ENCODE measurements at regions of chr11 and their contacts with region 1.

Region 1: DNA sequence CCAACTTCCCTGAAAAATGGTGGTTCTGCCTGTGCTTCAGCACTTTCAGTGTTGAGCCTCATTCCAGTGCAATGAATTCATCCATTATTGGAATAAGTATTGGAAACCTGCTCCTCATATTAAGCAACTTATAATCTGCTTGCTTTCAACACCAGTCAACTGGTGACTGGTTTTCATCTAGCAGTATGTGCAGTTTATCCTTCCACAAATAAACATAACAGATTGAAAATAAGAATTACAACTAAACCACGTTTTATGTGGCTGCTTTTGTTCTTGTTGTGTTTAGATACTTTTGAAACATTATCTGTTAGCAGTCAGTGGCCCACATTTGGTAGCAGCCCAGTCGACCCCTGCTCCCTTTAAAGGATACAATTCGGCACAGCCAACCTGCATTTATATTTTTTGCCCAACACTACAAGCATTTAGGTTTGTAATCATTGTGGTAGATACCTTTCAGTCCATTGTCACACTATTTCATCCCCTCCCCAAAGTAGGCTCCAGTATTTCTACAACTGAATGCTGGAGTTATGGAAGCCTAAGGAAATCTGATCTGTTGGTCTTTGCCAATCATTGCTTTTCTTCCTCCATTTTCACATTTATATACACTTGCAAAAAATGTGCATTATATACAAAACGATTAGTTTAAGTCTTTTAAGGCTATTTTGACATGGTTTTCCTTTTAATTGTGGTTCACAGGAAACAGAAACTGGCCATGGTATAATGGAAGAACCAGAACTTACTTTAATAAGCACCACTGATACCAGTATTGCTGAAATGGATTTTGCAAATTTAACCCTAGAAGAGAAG is 13.1 kb downstream of the TAF1D start:
- DNase-seq: no peak
- H3K4me3 ChIP-seq: no peak overlapping the region
- H3K27ac ChIP-seq: no peak overlapping the region
- H3K4me1 ChIP-seq: peaks cover 0 to 10% (median 4%) of the 10 kb centered on the region in 4 donors
- H3K27me3 ChIP-seq: no peaks in the 10 kb centered on the region
- CTCF ChIP-seq: no peak
- EP300 ChIP-seq: no peak
- POLR2A ChIP-seq: no peak

Region 2: DNA sequence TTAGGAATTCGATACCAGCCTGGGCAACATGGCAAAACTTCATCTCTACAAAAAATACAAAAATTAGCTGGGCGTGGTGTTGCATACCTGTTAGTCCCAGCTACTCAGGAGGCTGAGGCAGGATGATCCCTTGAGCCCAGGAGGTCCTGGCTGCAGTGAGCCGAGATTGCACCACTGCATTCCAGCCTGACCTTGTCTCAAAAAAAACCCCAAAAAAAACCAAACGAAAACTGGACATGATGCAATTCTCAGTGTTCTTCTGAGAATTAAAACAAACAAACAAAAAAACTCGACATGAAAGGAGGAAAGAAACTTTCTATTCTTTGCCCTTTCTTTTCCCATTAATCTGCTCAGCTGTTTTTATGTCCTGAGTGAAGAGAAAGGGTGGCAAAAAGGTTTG is 63.3 kb after region 1 on chr11:
- in situ Hi-C with region 1: no loop called
- intact Hi-C with region 1: loop called (anchors 10 kb)
- DNase-seq: no peak
- H3K4me3 ChIP-seq: no peak overlapping the region
- H3K27ac ChIP-seq: no peak overlapping the region
- H3K4me1 ChIP-seq: peaks cover 6 to 13% (median 10%) of the 10 kb centered on the region in 4 donors
- H3K27me3 ChIP-seq: no peaks in the 10 kb centered on the region
- CTCF ChIP-seq: no peak
- EP300 ChIP-seq: no peak
- POLR2A ChIP-seq: no peak